Right cardiac atrium (tissue), 5 donors: ENCODE measurements at regions of chrX and their contacts with region 1.

Region 1: DNA sequence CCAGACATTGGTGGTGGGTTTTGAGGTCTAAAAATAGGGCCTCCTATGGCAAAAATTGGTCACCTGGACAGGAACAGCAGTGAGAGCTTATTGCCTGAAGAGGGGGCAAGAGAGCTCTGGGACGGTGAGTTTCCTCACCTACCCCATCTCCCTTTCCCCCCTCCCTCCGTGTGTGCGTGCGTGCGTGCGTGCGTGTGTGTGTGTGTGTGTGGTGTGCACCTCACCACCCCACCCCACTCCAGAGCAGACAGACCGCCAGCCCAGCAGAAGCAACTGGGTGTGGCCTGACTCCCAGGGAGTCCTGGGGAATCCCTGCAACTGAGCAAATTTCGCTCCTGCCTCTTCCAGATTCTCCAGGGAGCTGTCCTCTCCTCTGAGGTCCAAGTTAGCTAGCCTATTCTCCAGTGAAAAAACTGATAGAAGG is 44.7 kb downstream of the PRPS1 start:
- DNase-seq: peak; percentile 74 to 90 (median 82)
- ATAC-seq: peak; percentile 38 to 52
- H3K4me3 ChIP-seq: no peak overlapping the region
- H3K27ac ChIP-seq: peak overlapping the region; percentile 100
- H3K4me1 ChIP-seq: peaks cover 8% of the 10 kb centered on the region
- H3K27me3 ChIP-seq: no peaks in the 10 kb centered on the region

Region 2: GRCh38 chrX:107551546-107551945 is 121.4 kb before region 1 on chrX:
- intact Hi-C with region 1: no loop called
- DNase-seq: no peak
- ATAC-seq: no peak
- H3K4me3 ChIP-seq: no peak overlapping the region
- H3K27ac ChIP-seq: no peak overlapping the region
- H3K4me1 ChIP-seq: no peaks in the 10 kb centered on the region
- H3K27me3 ChIP-seq: no peaks in the 10 kb centered on the region

Region 3: DNA sequence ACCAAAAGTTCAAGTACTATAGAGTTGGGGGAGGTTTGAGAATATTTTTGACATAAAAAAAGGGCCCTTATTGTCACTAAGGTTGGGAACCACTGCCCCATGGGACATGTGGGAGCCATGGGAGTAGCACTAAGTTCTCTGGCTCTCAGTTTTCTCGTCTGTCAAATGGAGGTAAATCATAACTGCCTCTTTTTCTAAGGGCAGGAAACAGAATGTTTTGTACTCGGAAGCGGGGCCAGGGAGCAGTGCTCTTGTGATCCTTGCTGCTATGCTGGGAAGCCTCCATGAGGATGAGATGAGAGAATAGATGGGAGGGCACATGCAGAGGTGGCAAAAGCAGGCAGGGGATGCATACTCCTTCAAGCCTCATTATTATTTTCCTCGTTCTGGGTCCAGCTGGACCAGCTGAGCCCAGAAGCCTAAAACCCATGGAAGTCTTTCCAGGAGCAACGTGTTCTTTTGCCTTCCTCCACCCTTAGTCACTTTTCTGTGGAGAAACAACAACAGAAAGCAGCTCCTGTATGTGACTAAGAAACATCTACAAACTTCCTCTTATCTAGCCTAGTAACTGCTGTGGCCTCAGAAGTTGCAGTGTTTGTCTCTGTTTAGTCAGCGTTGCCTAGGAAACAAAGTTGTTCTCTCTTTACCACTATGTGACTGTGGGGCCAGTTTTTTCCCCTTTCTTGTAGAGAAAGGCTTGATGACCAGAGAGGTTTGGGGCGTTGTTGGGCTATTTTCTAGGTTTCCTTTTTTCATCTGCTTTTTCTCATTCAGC is 37.8 kb after region 1 on chrX:
- intact Hi-C with region 1: loop called in 3 of 4 experiments (anchors 5 kb)
- DNase-seq: no peak
- ATAC-seq: peak; percentile 78 to 87
- H3K4me3 ChIP-seq: no peak overlapping the region
- H3K27ac ChIP-seq: peak overlapping the region; percentile 99
- H3K4me1 ChIP-seq: peaks cover 3% of the 10 kb centered on the region
- H3K27me3 ChIP-seq: no peaks in the 10 kb centered on the region

Region 4: GRCh38 chrX:107716816-107717700 is 44.1 kb after region 1 on chrX:
- intact Hi-C with region 1: loop called in 3 of 4 experiments (anchors 5 kb)
- DNase-seq: peak; percentile 86 to 94 (median 92)
- ATAC-seq: peak; percentile 86 to 87
- H3K4me3 ChIP-seq: peak overlapping the region; percentile 94
- H3K27ac ChIP-seq: peak overlapping the region; percentile 99
- H3K4me1 ChIP-seq: peaks cover 12% of the 10 kb centered on the region
- H3K27me3 ChIP-seq: no peaks in the 10 kb centered on the region

Region 5: GRCh38 chrX:107769581-107770317 is 96.8 kb after region 1 on chrX:
- intact Hi-C with region 1: no loop called
- DNase-seq: no peak
- ATAC-seq: no peak
- H3K4me3 ChIP-seq: no peak overlapping the region
- H3K27ac ChIP-seq: no peak overlapping the region
- H3K4me1 ChIP-seq: peaks cover 6% of the 10 kb centered on the region
- H3K27me3 ChIP-seq: no peaks in the 10 kb centered on the region